Psoas muscle (tissue), 8 donors: ENCODE measurements at regions of chr18 and their contacts with region 1.

Region 1: GRCh38 chr18:76410660-76411417 is 84.2 kb downstream of the ZNF516 start:
- DNase-seq: no peak
- ATAC-seq: peak in 2 of 4 donors; percentile 29 to 46
- H3K4me3 ChIP-seq: no peak overlapping the region
- H3K27ac ChIP-seq: no peak overlapping the region
- H3K4me1 ChIP-seq: peaks cover 28% of the 10 kb centered on the region
- H3K27me3 ChIP-seq: no peaks in the 10 kb centered on the region
- CTCF ChIP-seq: no peak

Region 2: GRCh38 chr18:76445275-76445674 is 34.4 kb after region 1 on chr18:
- intact Hi-C with region 1: loop called in 1 of 2 experiments (anchors 5 kb)
- DNase-seq: no peak
- ATAC-seq: peak in 3 of 4 donors; percentile 45 to 52 (median 49)
- H3K4me3 ChIP-seq: no peak overlapping the region
- H3K27ac ChIP-seq: peak overlapping the region; percentile 65
- H3K4me1 ChIP-seq: peaks cover 56% of the 10 kb centered on the region
- H3K27me3 ChIP-seq: no peaks in the 10 kb centered on the region
- CTCF ChIP-seq: no peak